Mammary epithelial cell (primary cell): ENCODE measurements at regions of chr7 and their contacts with region 1.

Region 1: DNA sequence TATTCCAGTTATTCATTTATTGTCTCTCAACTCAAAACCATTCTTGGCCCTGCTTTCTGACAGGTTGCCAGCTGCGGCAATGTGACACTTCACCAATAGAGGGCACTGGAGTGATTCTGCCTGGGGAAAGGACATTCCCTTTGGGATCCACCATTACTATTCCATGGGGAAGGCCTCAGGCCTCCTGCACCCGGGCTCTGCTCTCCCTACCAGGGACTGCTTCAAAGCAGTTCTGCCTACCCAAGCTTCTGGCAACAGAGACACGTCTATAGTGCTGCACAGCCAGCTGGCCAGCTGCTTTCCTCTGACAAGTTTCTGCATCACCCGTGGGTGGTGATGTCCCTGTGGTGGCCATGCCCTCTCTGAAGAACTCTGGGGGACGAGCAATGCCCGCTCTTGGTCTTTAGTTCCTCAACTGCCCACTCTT is 163.8 kb downstream of the ELMO1 start:
- DNase-seq: peak; percentile 28
- H3K4me3 ChIP-seq: no peak overlapping the region
- H3K27ac ChIP-seq: no peak overlapping the region
- H3K4me1 ChIP-seq: no peaks in the 10 kb centered on the region
- H3K27me3 ChIP-seq: no peaks in the 10 kb centered on the region
- CTCF ChIP-seq: peak; percentile 43 to 58

Region 2: GRCh38 chr7:37352974-37353948 is 68.4 kb after region 1 on chr7:
- CTCF ChIA-PET with region 1: interaction called, 3 read pairs
- dilution Hi-C with region 1: no loop called
- in situ Hi-C with region 1: no loop called
- intact Hi-C with region 1: loop called (anchors 5 kb)
- DNase-seq: no peak
- H3K4me3 ChIP-seq: no peak overlapping the region
- H3K27ac ChIP-seq: no peak overlapping the region
- H3K4me1 ChIP-seq: no peaks in the 10 kb centered on the region
- H3K27me3 ChIP-seq: no peaks in the 10 kb centered on the region
- CTCF ChIP-seq: no peak

Region 3: GRCh38 chr7:37495574-37496184 is 210.9 kb after region 1 on chr7:
- CTCF ChIA-PET with region 1: no interaction called
- dilution Hi-C with region 1: no loop called
- in situ Hi-C with region 1: loop called in 1 of 2 experiments (anchors 10 kb)
- intact Hi-C with region 1: no loop called
- DNase-seq: peak; percentile 25
- H3K4me3 ChIP-seq: no peak overlapping the region
- H3K27ac ChIP-seq: no peak overlapping the region
- H3K4me1 ChIP-seq: no peaks in the 10 kb centered on the region
- H3K27me3 ChIP-seq: no peaks in the 10 kb centered on the region
- CTCF ChIP-seq: peak; percentile 61 to 70

Region 4: GRCh38 chr7:37732253-37732652 is 447.4 kb after region 1 on chr7:
- CTCF ChIA-PET with region 1: no interaction called
- dilution Hi-C with region 1: no loop called
- in situ Hi-C with region 1: no loop called
- intact Hi-C with region 1: loop called (anchors 10 kb)
- DNase-seq: peak; percentile 12
- H3K4me3 ChIP-seq: no peak overlapping the region
- H3K27ac ChIP-seq: no peak overlapping the region
- H3K4me1 ChIP-seq: no peaks in the 10 kb centered on the region
- H3K27me3 ChIP-seq: no peaks in the 10 kb centered on the region
- CTCF ChIP-seq: peak; percentile 21 to 42